ENCODE measurements at regions of chr16 and their contacts with region 1.

Region 1: DNA sequence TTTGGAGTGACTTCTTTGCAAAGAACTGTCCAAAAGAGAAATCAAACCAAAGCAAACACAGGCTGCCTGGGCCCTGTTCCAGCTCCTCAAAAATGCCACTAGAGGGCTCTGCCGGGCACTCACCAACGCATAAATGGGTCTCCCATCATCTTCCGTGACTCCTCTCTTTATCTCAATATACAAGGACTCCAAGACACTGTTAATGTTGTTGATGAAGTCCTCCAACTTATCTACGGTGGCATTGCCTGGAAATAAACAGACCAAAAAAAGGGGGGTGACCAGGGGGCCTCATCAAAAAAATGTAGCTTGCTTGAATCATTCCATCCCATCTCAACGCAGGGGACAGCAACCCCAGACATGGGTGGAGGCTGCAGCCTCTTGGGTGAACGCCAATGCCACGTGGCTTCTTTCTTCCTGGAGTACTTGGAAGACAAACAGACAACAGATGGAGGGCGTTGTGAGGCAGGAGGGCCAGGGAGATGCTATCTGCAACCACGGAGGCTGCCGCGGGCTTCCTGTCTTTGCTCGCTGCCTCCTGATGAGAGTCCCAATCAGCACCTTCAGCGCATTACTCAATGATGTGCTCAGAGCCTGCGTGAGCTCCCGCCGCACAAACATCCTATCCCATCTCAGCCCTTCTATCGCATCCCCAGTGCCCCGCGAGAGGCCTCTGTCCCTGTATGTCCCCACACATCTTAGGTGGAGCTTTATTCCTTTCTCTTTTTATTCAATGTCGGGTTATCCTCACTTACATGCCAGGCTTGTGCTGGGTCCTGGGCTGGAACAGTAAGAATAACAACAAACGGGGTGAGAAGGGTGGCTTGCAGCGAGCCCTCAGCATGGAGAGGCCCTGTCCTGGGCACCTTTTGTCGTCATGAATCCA is 32.0 kb downstream of the KDM8 start:
- DNase-seq: peak; percentile 65

Region 2: DNA sequence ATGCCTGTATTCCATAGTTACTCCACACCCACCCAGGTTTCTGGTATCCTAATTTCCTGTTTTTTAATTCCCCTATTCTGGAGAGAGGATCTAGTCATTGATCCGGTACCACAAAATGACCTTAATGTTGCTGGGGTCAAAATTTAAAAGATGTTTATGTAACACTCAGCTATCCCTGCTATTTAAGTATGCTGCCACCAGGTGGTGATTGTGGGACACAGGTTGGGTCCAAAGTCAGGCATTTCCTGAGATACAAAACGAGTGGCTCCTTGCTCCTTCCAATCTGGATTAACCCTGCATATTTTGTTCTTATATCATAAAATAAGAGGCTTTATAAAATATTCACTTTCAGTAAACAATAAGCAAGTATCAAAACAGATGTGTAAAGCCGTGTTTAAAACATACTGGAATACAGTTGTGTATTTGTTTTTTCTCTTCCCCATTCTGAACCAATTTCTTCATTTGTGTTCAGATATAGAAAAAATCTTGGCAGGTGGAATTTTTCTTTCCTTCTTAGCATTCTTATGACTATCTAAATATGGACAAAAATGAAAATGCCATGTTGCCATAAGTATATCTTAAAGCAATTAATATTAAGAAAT is 1527.2 kb before region 1 on chr16:
- CTCF ChIA-PET with region 1: interaction called, 13 read pairs
- POLR2A ChIA-PET with region 1: no interaction called
- DNase-seq: peak; percentile 21

Region 3: GRCh38 chr16:27080870-27081269 is 154.4 kb before region 1 on chr16:
- CTCF ChIA-PET with region 1: no interaction called
- POLR2A ChIA-PET with region 1: no interaction called
- DNase-seq: peak; percentile 33

Region 4: GRCh38 chr16:27097800-27098230 is 137.5 kb before region 1 on chr16:
- CTCF ChIA-PET with region 1: no interaction called
- POLR2A ChIA-PET with region 1: no interaction called
- DNase-seq: no peak

Measured in HEK293T (cell line).